ENCODE measurements at regions of chr3 and their contacts with region 1.

Region 1: DNA sequence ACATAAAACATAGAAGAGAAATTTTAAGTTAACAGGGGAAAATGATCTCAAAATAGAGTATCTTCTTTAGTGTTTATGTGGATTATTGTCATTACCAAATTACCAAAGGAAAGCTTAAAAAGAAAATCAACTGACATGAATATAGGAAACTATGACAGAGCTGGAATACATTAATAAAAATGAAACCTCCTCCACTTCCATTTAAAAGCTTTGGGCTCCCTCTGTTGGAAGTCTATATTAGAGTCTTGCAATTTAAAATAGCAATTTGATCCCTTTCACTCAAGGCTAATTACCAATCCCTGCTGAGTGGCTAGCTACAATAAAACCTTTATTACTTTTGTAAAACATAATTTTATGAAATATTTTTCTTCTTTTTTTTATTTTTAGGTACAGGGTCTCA is 61.4 kb upstream of the IMPG2 start:
- DNase-seq: no peak
- H3K4me3 Mint-ChIP-seq: no peak overlapping the region
- H3K27ac Mint-ChIP-seq: no peak overlapping the region
- H3K4me1 Mint-ChIP-seq: peaks cover 31% of the 10 kb centered on the region
- H3K27me3 Mint-ChIP-seq: no peaks in the 10 kb centered on the region

Region 2: DNA sequence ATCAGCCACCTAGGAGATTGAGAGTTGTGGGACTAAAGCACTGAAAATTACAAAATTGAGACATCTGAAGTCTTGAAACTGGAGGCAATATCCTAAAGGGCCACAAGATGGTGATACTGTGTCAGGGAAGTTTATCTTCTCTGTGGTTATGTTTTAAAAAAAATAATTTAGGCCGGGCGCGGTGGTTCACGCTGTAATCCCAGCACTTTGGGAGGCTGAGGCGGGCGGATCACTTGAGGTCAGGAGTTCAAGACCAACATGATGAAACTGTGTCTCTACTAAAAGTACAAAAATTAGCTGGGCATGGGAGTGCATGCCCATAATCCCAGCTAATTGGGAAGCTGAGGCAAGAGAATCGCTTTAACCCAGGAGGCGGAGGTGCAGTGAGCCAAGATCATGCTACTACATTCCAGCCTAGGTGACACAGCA is 1065.2 kb before region 1 on chr3:
- intact Hi-C with region 1: loop called (anchors 5 kb)
- DNase-seq: no peak
- H3K4me3 Mint-ChIP-seq: no peak overlapping the region
- H3K27ac Mint-ChIP-seq: peak overlapping the region; percentile 51
- H3K4me1 Mint-ChIP-seq: peaks cover 12% of the 10 kb centered on the region
- H3K27me3 Mint-ChIP-seq: no peaks in the 10 kb centered on the region

Region 3: DNA sequence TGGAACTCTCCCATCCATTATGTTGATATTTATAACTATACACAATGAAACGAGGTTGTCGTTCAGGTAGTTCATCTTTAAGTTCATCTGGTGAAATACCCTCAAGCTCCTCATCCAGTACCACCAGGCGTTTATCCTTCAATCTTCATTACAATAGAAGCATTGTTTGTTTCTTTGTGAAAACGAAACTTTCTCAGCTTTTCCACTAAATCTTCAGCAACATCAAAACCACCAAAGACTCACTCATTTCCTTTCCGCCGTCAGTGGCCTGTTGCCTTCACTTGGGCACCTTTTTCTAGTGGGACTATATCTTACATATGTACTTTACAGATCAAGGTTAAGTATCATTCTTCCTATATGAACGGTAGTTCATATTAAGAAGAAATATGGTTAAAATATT is 716.6 kb before region 1 on chr3:
- intact Hi-C with region 1: loop called (anchors 1 kb)
- DNase-seq: peak; percentile 50
- H3K4me3 Mint-ChIP-seq: peak overlapping the region; percentile 50
- H3K27ac Mint-ChIP-seq: peak overlapping the region; percentile 57
- H3K4me1 Mint-ChIP-seq: peaks cover 32% of the 10 kb centered on the region
- H3K27me3 Mint-ChIP-seq: peaks cover 3% of the 10 kb centered on the region

Region 4: GRCh38 chr3:100893590-100893989 is 488.2 kb before region 1 on chr3:
- intact Hi-C with region 1: loop called (anchors 5 kb)
- DNase-seq: no peak
- H3K4me3 Mint-ChIP-seq: no peak overlapping the region
- H3K27ac Mint-ChIP-seq: no peak overlapping the region
- H3K4me1 Mint-ChIP-seq: peaks cover 6% of the 10 kb centered on the region
- H3K27me3 Mint-ChIP-seq: peaks cover 9% of the 10 kb centered on the region

Region 5: DNA sequence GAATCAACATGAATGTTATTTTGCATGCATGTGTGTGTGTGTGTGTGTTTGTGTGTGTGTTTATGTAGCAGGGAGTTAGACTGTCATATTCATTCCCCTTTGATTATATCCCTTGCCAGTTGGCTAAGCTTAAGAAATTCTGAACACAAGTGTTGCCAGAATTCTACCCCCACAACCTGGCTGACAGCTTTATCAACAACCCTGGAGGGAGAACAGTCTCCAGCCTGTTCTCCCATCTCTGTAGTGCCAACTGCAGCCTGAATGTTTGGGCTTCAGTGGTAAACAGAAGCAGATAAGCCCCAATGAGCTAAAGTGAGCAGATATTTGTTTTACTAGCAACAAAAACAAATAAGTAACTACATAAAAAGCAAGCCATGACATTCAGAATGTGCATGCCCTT is 226.0 kb before region 1 on chr3:
- intact Hi-C with region 1: no loop called
- DNase-seq: no peak
- H3K4me3 Mint-ChIP-seq: no peak overlapping the region
- H3K27ac Mint-ChIP-seq: no peak overlapping the region
- H3K4me1 Mint-ChIP-seq: peaks cover 6% of the 10 kb centered on the region
- H3K27me3 Mint-ChIP-seq: peaks cover 3% of the 10 kb centered on the region

Region 6: DNA sequence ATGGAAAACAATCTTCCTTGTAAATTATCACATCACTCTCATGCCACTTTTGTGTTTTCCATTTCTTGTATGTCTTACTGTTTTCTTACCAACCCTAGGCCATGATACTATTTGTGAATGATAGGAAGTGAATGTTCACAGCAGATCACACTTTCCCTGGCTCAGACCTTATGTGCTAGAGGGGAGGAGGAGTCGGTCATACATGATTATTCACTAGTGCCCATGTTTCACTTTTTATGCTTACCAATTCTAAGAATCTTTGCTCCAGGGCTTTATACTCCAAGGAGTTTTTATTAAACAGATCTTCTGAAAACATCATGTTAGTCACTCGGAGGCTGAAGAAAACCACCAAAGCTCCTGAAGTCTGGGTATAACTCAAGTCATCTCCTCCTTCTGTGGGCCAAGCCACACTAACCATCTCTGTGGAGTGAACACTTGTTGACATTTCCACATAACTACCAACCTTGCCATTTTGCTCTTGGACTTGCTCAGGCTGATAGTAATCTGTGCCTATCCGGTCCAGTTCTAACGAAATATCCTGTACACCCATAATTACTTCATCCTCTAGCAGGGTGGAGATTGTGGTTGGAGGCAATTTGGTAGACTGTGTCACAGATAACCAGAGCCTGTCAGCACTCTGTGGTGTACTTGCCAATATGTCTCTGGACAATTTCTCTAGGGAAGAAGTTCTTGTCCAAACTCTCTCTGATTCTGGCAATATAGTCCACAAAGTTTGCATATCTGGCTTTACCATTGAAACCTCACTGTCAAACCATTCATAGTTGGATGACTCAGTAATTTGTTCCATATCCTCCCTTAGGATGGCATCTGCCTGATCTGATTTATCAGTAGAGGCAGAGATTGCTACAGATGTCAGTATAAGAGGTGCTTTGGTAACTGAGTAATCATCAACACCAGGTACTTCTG is 138.3 kb before region 1 on chr3:
- intact Hi-C with region 1: loop called (anchors 2 kb)
- DNase-seq: no peak
- H3K4me3 Mint-ChIP-seq: no peak overlapping the region
- H3K27ac Mint-ChIP-seq: peak overlapping the region; percentile 59
- H3K4me1 Mint-ChIP-seq: peaks cover 16% of the 10 kb centered on the region
- H3K27me3 Mint-ChIP-seq: no peaks in the 10 kb centered on the region

Region 7: DNA sequence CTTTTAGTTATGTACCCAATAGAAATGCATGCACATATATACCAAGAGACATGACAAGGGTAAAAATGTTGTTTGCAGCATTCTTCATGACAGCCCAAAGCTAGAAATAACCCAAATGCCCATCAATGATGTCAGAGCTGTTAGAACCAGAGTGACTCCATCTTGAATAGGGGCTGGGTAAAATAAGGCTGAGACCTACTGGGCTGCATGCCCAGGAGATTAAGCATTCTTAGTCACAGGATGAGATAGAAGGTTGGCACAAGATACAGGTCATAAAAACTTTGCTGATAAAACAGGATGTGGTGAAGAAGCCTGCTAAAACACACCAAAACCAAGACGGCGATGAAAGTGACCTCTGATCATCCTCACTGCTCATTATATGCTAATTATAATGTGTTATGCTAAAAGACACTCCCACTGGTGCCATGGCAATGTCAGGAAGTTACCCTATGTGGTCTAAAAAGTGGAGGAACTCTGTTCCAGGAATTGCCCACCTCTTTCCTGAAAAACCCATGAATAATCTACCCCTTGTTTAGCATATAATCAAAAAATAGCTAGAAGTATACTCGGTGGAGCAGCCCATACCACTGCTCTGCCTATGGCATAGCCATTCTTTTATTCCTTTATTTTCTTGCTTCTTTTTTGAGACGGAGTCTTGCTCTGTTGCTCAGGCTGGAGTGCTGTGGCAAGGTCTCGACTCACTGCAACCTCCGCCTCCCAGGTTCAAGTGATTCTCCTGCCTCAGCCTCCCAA is 262.2 kb after region 1 on chr3:
- intact Hi-C with region 1: loop called (anchors 5 kb)
- DNase-seq: peak; percentile 29
- H3K4me3 Mint-ChIP-seq: peak overlapping the region; percentile 5
- H3K27ac Mint-ChIP-seq: peak overlapping the region; percentile 78
- H3K4me1 Mint-ChIP-seq: peaks cover 24% of the 10 kb centered on the region
- H3K27me3 Mint-ChIP-seq: no peaks in the 10 kb centered on the region

Region 8: GRCh38 chr3:102605153-102605552 is 1223.3 kb after region 1 on chr3:
- intact Hi-C with region 1: no loop called
- DNase-seq: no peak
- H3K4me3 Mint-ChIP-seq: no peak overlapping the region
- H3K27ac Mint-ChIP-seq: no peak overlapping the region
- H3K4me1 Mint-ChIP-seq: no peaks in the 10 kb centered on the region
- H3K27me3 Mint-ChIP-seq: no peaks in the 10 kb centered on the region

Measured in activated T-helper 2 cell treated with anti-CD3 and anti-CD28 coated beads, Interferon-gamma antibody, Interleukin-2, Interleukin-4, amounts not matched to agents 10 μg/mL and 5 μg/mL and 100 μg/mL, durations not matched to agents 14 hours and 24 hours and 36 hours (primary cell).